CD8-positive, alpha-beta T cell (primary cell): ENCODE measurements at regions of chr11 and their contacts with region 1.

Region 1: DNA sequence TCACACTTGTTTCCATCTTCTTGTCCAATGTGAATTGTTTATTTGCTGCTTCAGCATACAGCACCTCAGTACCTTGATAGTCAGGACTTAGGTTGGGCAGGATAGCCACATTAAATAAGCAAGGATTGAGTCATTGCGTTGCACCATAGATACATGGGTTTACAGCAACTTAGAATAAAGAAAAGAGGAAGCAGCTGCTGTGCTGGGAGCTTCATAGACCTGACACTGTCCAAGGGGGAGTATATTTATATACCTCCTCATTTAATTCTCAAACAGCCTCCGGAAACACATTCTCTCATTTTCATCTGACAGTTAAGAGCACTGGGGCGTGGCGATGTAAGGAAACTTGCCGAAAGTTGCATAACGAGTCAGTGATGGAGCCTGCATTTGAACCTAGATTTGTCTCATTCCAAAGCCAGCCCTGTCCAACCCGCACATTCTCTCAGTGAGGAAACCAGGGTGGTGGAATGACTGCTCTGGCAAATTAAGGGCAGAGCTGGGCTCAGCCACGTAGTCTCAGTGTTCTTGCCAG is 42.2 kb downstream of the UBASH3B start:
- DNase-seq: peak in 7 of 9 experiments; percentile 14 to 72 (median 60)
- ATAC-seq: peak; percentile 81
- H3K4me3 ChIP-seq: peak overlapping the region; percentile 4 to 25
- H3K4me3 Mint-ChIP-seq: peak overlapping the region; percentile 66
- H3K27ac ChIP-seq: peak overlapping the region; percentile 57 to 64
- H3K27ac Mint-ChIP-seq: peak overlapping the region; percentile 94
- H3K4me1 ChIP-seq: peaks cover 80% of the 10 kb centered on the region
- H3K4me1 Mint-ChIP-seq: peaks cover 91% of the 10 kb centered on the region
- H3K27me3 ChIP-seq: no peaks in the 10 kb centered on the region
- H3K27me3 Mint-ChIP-seq: no peaks in the 10 kb centered on the region
- CTCF ChIP-seq: no peak

Region 2: GRCh38 chr11:122673701-122674100 is 24.0 kb before region 1 on chr11:
- CTCF ChIA-PET with region 1: interaction called, 19 read pairs
- POLR2A ChIA-PET with region 1: interaction called, 32 read pairs
- intact Hi-C with region 1: loop called in 1 of 2 experiments (anchors 2 kb)
- DNase-seq: peak in 1 of 9 experiments; percentile 32
- ATAC-seq: no peak
- H3K4me3 ChIP-seq: no peak overlapping the region
- H3K4me3 Mint-ChIP-seq: no peak overlapping the region
- H3K27ac ChIP-seq: no peak overlapping the region
- H3K27ac Mint-ChIP-seq: peak overlapping the region; percentile 39
- H3K4me1 ChIP-seq: peaks cover 73% of the 10 kb centered on the region
- H3K4me1 Mint-ChIP-seq: peaks cover 82% of the 10 kb centered on the region
- H3K27me3 ChIP-seq: no peaks in the 10 kb centered on the region
- H3K27me3 Mint-ChIP-seq: no peaks in the 10 kb centered on the region
- CTCF ChIP-seq: no peak

Region 3: DNA sequence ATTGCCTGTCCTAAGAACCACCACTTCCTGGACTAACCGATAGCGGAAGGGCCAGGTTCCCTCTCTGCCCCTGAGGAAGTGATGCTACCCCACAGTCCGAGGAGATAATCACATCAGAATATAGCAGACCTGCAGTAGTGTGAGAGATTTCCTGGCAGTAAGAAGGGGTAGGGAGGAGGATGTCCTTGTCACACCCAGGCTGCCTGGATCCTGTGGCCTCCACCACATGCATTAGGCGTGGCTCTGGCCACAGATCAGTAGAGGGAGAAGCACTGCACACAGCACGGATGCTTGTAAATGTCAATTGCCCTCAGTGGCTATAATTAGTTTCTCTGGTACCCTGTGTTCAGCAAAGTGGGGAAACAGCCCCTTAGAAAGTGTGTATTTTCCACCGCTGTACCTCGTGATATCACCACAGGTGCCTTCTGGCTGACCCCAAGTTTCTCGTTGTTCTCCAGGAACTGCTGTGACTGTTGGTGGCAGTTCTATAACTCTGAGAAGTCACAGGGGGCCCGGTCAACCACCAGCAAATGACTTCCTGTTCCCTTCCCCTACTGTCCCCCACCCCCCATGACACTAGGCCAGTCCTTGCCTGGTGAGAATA is 19.7 kb after region 1 on chr11:
- CTCF ChIA-PET with region 1: interaction called, 6 read pairs
- POLR2A ChIA-PET with region 1: interaction called, 9 read pairs
- intact Hi-C with region 1: loop called in 1 of 2 experiments (anchors 2 kb)
- DNase-seq: peak in 8 of 9 experiments; percentile 20 to 68 (median 47)
- ATAC-seq: peak; percentile 61
- H3K4me3 ChIP-seq: no peak overlapping the region
- H3K4me3 Mint-ChIP-seq: peak overlapping the region; percentile 56
- H3K27ac ChIP-seq: peak overlapping the region; percentile 23 to 55
- H3K27ac Mint-ChIP-seq: peak overlapping the region; percentile 91
- H3K4me1 ChIP-seq: peaks cover 69% of the 10 kb centered on the region
- H3K4me1 Mint-ChIP-seq: peaks cover 80% of the 10 kb centered on the region
- H3K27me3 ChIP-seq: no peaks in the 10 kb centered on the region
- H3K27me3 Mint-ChIP-seq: no peaks in the 10 kb centered on the region
- CTCF ChIP-seq: no peak

Region 4: DNA sequence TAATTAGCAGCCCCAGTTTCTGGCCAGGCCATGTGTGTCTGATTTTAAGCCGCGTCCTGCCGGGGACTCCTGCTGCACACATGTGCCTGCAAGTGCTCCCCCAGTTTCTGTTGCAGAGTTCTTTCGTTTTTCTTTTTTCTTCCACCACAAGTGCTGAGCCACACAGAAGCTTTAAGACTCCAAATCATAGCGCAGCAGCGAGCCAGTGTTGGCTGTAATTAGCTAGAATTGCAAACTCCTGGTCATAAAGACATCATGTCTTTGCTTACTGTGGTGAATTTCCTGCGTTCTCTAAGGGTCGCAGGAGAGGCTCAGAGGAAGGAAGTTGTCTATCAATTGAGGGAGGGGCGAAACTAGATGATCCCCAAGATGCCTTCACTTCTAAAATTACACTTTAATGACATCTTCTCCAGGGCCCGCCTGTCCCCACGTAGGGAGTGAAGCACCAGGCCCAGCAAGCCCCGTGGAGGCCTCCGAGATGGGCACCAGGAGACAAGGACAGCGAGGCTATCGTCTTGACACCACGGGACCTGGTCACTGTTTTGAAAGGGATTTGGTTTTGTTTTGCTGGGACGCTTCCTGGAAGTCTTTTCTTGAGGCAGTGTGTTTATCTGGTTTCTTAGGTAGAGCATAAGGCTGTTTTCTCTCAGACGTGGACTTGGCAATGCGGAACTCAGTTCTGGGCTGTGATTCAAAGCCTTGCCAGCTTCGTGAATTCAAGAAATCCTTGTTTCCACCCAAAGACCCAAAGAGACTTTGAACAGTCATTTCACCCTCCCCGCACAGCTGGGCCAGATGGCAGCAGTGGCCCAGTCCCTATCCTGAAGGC is 29.6 kb after region 1 on chr11:
- CTCF ChIA-PET with region 1: interaction called, 3 read pairs
- POLR2A ChIA-PET with region 1: interaction called, 14 read pairs
- intact Hi-C with region 1: no loop called
- DNase-seq: peak in 8 of 9 experiments; percentile 6 to 67 (median 39)
- ATAC-seq: peak; percentile 74
- H3K4me3 ChIP-seq: peak overlapping the region; percentile 3 to 28
- H3K4me3 Mint-ChIP-seq: peak overlapping the region; percentile 80
- H3K27ac ChIP-seq: peak overlapping the region; percentile 56 to 74
- H3K27ac Mint-ChIP-seq: peak overlapping the region; percentile 98
- H3K4me1 ChIP-seq: peaks cover 66% of the 10 kb centered on the region
- H3K4me1 Mint-ChIP-seq: peaks cover 80% of the 10 kb centered on the region
- H3K27me3 ChIP-seq: no peaks in the 10 kb centered on the region
- H3K27me3 Mint-ChIP-seq: no peaks in the 10 kb centered on the region
- CTCF ChIP-seq: no peak

Region 5: GRCh38 chr11:122743949-122744348 is 46.2 kb after region 1 on chr11:
- CTCF ChIA-PET with region 1: interaction called, 19 read pairs
- POLR2A ChIA-PET with region 1: interaction called, 12 read pairs
- intact Hi-C with region 1: loop called (anchors 1 to 2 kb)
- DNase-seq: peak; percentile 19 to 86 (median 73)
- ATAC-seq: peak; percentile 46
- H3K4me3 ChIP-seq: peak overlapping the region; percentile 24 to 40
- H3K4me3 Mint-ChIP-seq: no peak overlapping the region
- H3K27ac ChIP-seq: peak overlapping the region; percentile 46 to 70
- H3K27ac Mint-ChIP-seq: no peak overlapping the region
- H3K4me1 ChIP-seq: peaks cover 71% of the 10 kb centered on the region
- H3K4me1 Mint-ChIP-seq: peaks cover 15% of the 10 kb centered on the region
- H3K27me3 ChIP-seq: no peaks in the 10 kb centered on the region
- H3K27me3 Mint-ChIP-seq: no peaks in the 10 kb centered on the region
- CTCF ChIP-seq: no peak

Region 6: DNA sequence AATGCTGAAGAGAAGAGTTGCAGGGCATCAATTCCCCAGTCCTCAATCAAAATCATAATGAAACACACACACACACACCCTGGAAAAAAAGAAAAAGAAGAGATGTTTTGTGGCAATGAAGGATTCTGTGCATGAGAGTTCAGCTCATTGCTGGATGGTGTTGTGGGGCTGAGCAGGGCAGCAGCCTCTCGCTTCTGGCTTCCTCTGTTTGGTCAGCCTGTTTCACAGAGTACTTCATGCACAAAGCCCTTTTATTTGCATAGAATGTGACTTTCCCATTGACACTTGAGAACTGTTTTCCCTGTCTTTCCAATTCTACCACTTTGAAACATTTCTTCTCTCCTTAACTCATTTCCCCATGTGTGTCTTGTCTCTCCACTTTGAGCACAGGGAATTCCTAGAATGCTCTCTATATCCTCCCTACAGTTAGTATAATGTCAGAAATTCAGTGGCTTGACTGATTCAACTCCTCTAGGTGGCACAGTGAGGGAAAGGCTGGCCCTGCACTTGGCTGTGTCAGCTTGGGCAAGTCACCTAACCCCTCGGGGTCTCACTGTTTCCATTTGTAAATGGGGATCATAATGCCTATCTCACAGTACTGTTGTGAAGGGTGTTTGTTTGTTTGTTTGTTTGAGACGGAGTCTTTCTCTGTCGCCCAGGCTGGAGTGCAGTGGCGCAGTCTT is 309.3 kb after region 1 on chr11:
- CTCF ChIA-PET with region 1: no interaction called
- POLR2A ChIA-PET with region 1: no interaction called
- intact Hi-C with region 1: no loop called
- DNase-seq: no peak
- ATAC-seq: no peak
- H3K4me3 ChIP-seq: no peak overlapping the region
- H3K4me3 Mint-ChIP-seq: no peak overlapping the region
- H3K27ac ChIP-seq: no peak overlapping the region
- H3K27ac Mint-ChIP-seq: no peak overlapping the region
- H3K4me1 ChIP-seq: no peaks in the 10 kb centered on the region
- H3K4me1 Mint-ChIP-seq: no peaks in the 10 kb centered on the region
- H3K27me3 ChIP-seq: no peaks in the 10 kb centered on the region
- H3K27me3 Mint-ChIP-seq: no peaks in the 10 kb centered on the region
- CTCF ChIP-seq: no peak